CD8-positive, alpha-beta T cell (primary cell): ENCODE measurements at regions of chr11 and their contacts with region 1.

Region 1: DNA sequence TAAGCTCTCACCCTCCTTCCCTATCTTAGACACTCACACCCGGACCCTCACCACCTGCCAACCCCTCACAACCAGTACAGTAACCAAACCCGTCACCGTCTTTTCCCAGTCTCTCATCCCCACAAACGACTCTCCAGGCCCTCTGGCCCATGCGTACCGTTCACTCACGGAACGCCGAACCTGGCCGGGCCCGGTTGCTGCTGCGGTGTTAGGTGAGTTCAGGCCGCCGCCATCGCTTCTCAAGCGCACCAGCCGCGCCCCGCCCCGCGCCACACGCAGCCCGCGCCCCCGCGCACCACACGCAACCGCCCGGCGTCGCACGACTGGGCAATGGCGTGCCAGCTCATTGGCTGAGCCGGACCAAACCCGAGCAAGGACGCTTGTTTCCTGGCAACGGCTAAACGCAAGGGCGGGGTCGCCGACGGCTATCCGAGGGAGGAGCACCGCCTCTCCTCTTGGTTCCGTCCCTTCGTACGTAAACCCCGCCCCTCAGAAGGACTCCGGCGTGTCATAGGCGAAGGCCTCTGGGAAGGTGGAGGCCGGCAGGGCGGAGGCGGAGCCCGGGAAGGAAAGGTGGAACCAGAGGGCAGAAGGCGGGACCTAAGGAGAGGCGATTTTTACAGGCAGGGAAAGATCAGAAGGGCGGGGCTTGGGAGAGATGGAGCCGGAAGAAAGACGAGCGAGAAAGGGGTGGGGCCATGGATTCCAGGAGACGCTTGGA is at the start of gene FHIP1B:
- DNase-seq: peak; percentile 98 to 100 (median 99)
- ATAC-seq: peak; percentile 91
- H3K4me3 ChIP-seq: peak within 1 kb of the TSS; percentile 85 to 89
- H3K4me3 Mint-ChIP-seq: peak within 1 kb of the TSS; percentile 98
- H3K27ac ChIP-seq: peak within 1 kb of the TSS; percentile 76 to 88
- H3K27ac Mint-ChIP-seq: peak within 1 kb of the TSS; percentile 96
- H3K4me1 ChIP-seq: peaks cover 21% of the 10 kb centered on the region
- H3K4me1 Mint-ChIP-seq: peaks cover 45% of the 10 kb centered on the region
- H3K27me3 ChIP-seq: no peaks in the 10 kb centered on the region
- H3K27me3 Mint-ChIP-seq: no peaks in the 10 kb centered on the region
- CTCF ChIP-seq: no peak
- total RNA-seq, gene FHIP1B: 38.3 to 38.6 TPM

Region 2: DNA sequence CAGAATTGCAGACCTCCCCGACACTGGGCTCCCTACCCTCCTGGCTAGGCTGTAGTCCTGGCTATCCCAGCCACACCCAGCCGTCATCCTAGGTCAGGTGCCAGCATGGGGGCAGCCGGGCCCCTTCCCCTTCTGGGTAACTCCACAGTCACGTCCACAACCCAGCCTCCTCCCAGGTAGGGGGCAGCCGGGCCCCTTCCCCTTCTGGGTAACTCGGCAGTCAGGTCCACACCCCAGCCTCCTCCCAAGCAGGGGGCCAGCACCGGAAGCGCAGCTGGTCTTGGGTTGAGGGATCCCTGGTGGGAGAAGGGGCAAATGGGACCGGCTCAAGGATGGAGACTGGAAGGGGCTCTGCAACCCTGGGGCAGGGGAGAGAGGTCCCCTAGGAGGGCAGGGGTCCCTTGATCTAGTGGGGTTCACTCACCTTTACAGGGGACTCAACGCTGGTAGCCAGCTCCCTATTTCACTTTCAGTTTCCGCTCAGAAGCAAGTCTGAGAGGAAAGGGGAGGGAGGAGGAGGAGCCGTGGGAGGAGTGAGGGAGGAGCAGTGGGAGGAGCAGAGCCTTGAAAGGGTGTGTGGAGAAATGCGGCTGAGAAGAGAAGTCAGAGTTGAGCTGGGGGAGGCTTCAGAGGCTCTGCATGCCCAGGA is 1841.2 kb before region 1 on chr11 and contains the start of gene TRIM21:
- CTCF ChIA-PET with region 1: no interaction called
- POLR2A ChIA-PET with region 1: no interaction called
- intact Hi-C with region 1: loop called in 1 of 2 experiments (anchors 10 kb)
- DNase-seq: peak; percentile 78 to 93 (median 88)
- ATAC-seq: peak; percentile 99
- H3K4me3 ChIP-seq: peak within 1 kb of the TSS; percentile 81 to 89
- H3K4me3 Mint-ChIP-seq: peak within 1 kb of the TSS; percentile 94
- H3K27ac ChIP-seq: peak within 1 kb of the TSS; percentile 82 to 89
- H3K27ac Mint-ChIP-seq: peak within 1 kb of the TSS; percentile 95
- H3K4me1 ChIP-seq: peaks cover 18% of the 10 kb centered on the region
- H3K4me1 Mint-ChIP-seq: peaks cover 43% of the 10 kb centered on the region
- H3K27me3 ChIP-seq: no peaks in the 10 kb centered on the region
- H3K27me3 Mint-ChIP-seq: no peaks in the 10 kb centered on the region
- CTCF ChIP-seq: no peak
- total RNA-seq, gene TRIM21: 23.4 to 23.6 TPM

Region 3: GRCh38 chr11:5624489-5625279 is 609.9 kb before region 1 on chr11 and contains the start of gene TRIM34:
- CTCF ChIA-PET with region 1: no interaction called
- POLR2A ChIA-PET with region 1: no interaction called
- intact Hi-C with region 1: loop called in 1 of 2 experiments (anchors 2 kb)
- DNase-seq: peak; percentile 19 to 88 (median 67)
- ATAC-seq: peak; percentile 98
- H3K4me3 ChIP-seq: peak within 1 kb of the TSS; percentile 62 to 75
- H3K4me3 Mint-ChIP-seq: peak within 1 kb of the TSS; percentile 92
- H3K27ac ChIP-seq: peak within 1 kb of the TSS; percentile 52 to 86
- H3K27ac Mint-ChIP-seq: peak within 1 kb of the TSS; percentile 93
- H3K4me1 ChIP-seq: peaks cover 26% of the 10 kb centered on the region
- H3K4me1 Mint-ChIP-seq: peaks cover 49% of the 10 kb centered on the region
- H3K27me3 ChIP-seq: no peaks in the 10 kb centered on the region
- H3K27me3 Mint-ChIP-seq: no peaks in the 10 kb centered on the region
- CTCF ChIP-seq: no peak
- total RNA-seq, gene TRIM34: 2.8 to 2.9 TPM

Region 4: DNA sequence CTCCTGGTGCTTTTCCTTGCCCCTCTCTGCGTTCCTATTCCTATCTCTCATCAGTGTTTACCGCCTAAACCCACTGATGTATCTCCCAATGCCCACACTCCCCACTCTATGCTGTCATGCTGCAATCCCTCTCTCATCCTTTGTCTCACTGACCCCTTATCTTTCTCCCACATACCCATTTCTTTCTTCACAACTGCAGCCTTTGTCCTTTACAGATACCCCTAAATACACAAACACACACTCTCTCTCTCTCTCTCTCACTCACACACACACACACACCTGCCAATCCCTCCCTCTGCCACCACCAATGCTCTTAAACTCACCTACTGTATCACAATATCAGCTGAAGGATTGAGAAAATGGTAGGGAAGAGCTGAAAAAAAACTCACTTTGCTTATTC is 59.1 kb before region 1 on chr11:
- CTCF ChIA-PET with region 1: no interaction called
- POLR2A ChIA-PET with region 1: no interaction called
- intact Hi-C with region 1: no loop called
- DNase-seq: no peak
- ATAC-seq: no peak
- H3K4me3 ChIP-seq: no peak overlapping the region
- H3K4me3 Mint-ChIP-seq: no peak overlapping the region
- H3K27ac ChIP-seq: no peak overlapping the region
- H3K27ac Mint-ChIP-seq: no peak overlapping the region
- H3K4me1 ChIP-seq: no peaks in the 10 kb centered on the region
- H3K4me1 Mint-ChIP-seq: peaks cover 13% of the 10 kb centered on the region
- H3K27me3 ChIP-seq: no peaks in the 10 kb centered on the region
- H3K27me3 Mint-ChIP-seq: peaks cover 8% of the 10 kb centered on the region
- CTCF ChIP-seq: no peak

Region 5: GRCh38 chr11:6251120-6251733 is 16.7 kb after region 1 on chr11:
- CTCF ChIA-PET with region 1: interaction called, 18 read pairs
- POLR2A ChIA-PET with region 1: no interaction called
- intact Hi-C with region 1: no loop called
- DNase-seq: peak in 7 of 9 experiments; percentile 14 to 59 (median 47)
- ATAC-seq: peak; percentile 83
- H3K4me3 ChIP-seq: no peak overlapping the region
- H3K4me3 Mint-ChIP-seq: no peak overlapping the region
- H3K27ac ChIP-seq: no peak overlapping the region
- H3K27ac Mint-ChIP-seq: no peak overlapping the region
- H3K4me1 ChIP-seq: no peaks in the 10 kb centered on the region
- H3K4me1 Mint-ChIP-seq: no peaks in the 10 kb centered on the region
- H3K27me3 ChIP-seq: no peaks in the 10 kb centered on the region
- H3K27me3 Mint-ChIP-seq: no peaks in the 10 kb centered on the region
- CTCF ChIP-seq: peak; percentile 56

Region 6: DNA sequence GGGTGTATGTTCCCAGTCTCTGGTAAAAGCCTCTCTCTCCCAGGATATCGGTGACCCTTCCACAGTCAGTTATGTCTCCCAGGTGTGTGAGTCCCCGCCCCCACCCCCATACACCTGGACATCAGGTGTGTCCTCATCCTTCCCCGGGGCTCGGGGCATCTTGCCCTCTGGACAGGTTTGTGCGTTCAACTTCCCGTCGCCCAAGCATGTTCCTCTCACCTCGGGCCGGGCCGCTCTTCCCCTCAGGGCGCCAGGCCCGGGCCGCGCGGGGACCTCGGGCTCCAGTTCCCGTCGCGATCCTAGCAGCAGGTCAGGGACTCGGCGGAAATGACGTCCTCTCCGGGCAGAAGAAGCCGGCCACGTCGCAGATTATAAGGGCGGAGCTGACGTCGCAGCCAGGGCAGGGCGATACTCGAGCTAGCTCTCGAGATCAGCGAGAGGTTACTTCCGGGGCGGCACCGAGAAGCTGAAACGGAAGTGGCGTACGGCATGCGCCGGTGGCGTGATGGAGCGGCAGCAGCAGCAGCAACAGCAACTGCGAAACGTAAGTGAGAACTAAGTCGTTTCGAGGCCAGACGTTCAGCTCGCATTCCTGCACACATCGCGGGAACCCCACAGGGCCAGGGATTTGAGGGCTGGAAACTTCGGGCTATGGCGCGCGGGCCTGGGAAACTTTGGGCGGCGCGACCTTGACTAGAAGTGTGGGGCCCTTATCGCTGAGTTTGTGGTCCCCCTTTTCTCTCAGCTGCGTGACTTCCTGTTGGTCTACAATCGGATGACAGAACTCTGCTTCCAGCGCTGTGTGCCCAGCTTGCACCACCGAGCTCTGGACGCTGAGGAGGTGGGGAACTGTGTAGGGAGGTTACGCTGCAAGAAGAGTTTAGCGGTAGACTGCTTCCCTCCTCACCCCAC is 246.7 kb after region 1 on chr11 and contains the starts of genes ARFIP2 and TIMM10B:
- CTCF ChIA-PET with region 1: no interaction called
- POLR2A ChIA-PET with region 1: no interaction called
- intact Hi-C with region 1: loop called (anchors 1 kb)
- DNase-seq: peak; percentile 92 to 99 (median 96)
- ATAC-seq: peak; percentile 95
- H3K4me3 ChIP-seq: peak within 1 kb of the TSS; percentile 76 to 87
- H3K4me3 Mint-ChIP-seq: peak within 1 kb of the TSS; percentile 96
- H3K27ac ChIP-seq: peak within 1 kb of the TSS; percentile 87 to 98
- H3K27ac Mint-ChIP-seq: peak within 1 kb of the TSS; percentile 99
- H3K4me1 ChIP-seq: peaks cover 32% of the 10 kb centered on the region
- H3K4me1 Mint-ChIP-seq: peaks cover 40% of the 10 kb centered on the region
- H3K27me3 ChIP-seq: no peaks in the 10 kb centered on the region
- H3K27me3 Mint-ChIP-seq: no peaks in the 10 kb centered on the region
- CTCF ChIP-seq: no peak
- total RNA-seq, gene ARFIP2: 76.5 to 89.7 TPM
- total RNA-seq, gene TIMM10B: 68.6 to 73.0 TPM

Region 7: GRCh38 chr11:6746086-6746618 is 511.6 kb after region 1 on chr11:
- CTCF ChIA-PET with region 1: no interaction called
- POLR2A ChIA-PET with region 1: no interaction called
- intact Hi-C with region 1: loop called (anchors 2 to 5 kb)
- DNase-seq: peak in 8 of 9 experiments; percentile 26 to 82 (median 55)
- ATAC-seq: peak; percentile 84
- H3K4me3 ChIP-seq: peak overlapping the region; percentile 61 to 65
- H3K4me3 Mint-ChIP-seq: no peak overlapping the region
- H3K27ac ChIP-seq: peak overlapping the region; percentile 69 to 89
- H3K27ac Mint-ChIP-seq: no peak overlapping the region
- H3K4me1 ChIP-seq: peaks cover 57% of the 10 kb centered on the region
- H3K4me1 Mint-ChIP-seq: peaks cover 46% of the 10 kb centered on the region
- H3K27me3 ChIP-seq: no peaks in the 10 kb centered on the region
- H3K27me3 Mint-ChIP-seq: no peaks in the 10 kb centered on the region
- CTCF ChIP-seq: no peak